PC-3 (cell line): ENCODE measurements at regions of chr14 and their contacts with region 1.

Region 1: GRCh38 chr14:90815822-90816700 is at the start of gene TTC7B:
- DNase-seq: peak; percentile 50
- ATAC-seq: peak; percentile 84
- H3K4me3 ChIP-seq: peak within 1 kb of the TSS; percentile 91
- H3K27ac ChIP-seq: no peak within 1 kb of the TSS
- H3K4me1 ChIP-seq: peaks cover 8% of the 10 kb centered on the region
- H3K27me3 ChIP-seq: no peaks in the 10 kb centered on the region
- CTCF ChIP-seq: no peak
- total RNA-seq, gene TTC7B: 43.2 and 45.6 TPM in 2 replicates

Region 2: GRCh38 chr14:90193925-90194324 is 622.1 kb before region 1 on chr14:
- CTCF ChIA-PET with region 1: no interaction called
- POLR2A ChIA-PET with region 1: no interaction called
- intact Hi-C with region 1: no loop called
- DNase-seq: no peak
- ATAC-seq: no peak
- H3K4me3 ChIP-seq: no peak overlapping the region
- H3K27ac ChIP-seq: no peak overlapping the region
- H3K4me1 ChIP-seq: no peaks in the 10 kb centered on the region
- H3K27me3 ChIP-seq: no peaks in the 10 kb centered on the region
- CTCF ChIP-seq: peak; percentile 48

Region 3: DNA sequence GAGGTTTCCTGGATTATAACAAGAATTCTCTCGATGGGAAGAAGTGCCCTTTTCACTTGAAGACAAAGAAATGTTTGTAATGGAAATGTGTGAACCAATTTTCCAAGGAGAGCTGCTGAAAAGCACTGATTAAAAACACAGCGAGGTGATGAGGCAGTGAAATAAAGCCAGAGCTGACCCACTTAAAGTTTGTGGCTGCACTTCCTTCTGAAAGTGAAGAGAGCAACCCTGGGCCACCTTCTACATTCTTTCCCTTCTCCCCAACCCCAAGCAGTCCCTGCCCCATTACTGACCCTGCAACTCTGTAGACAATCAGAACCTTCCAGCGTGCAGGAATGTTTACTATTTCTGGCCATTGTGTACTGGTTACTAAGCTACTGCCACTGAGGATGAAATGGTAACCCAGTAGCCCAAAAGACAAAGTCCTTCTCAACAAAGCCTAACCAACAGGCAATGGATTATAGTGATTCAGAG is 173.8 kb before region 1 on chr14:
- CTCF ChIA-PET with region 1: no interaction called
- POLR2A ChIA-PET with region 1: interaction called, 16 read pairs
- intact Hi-C with region 1: no loop called
- DNase-seq: no peak
- ATAC-seq: no peak
- H3K4me3 ChIP-seq: no peak overlapping the region
- H3K27ac ChIP-seq: no peak overlapping the region
- H3K4me1 ChIP-seq: peaks cover 12% of the 10 kb centered on the region
- H3K27me3 ChIP-seq: no peaks in the 10 kb centered on the region
- CTCF ChIP-seq: no peak

Region 4: GRCh38 chr14:90774316-90774715 is 41.7 kb before region 1 on chr14:
- CTCF ChIA-PET with region 1: no interaction called
- POLR2A ChIA-PET with region 1: no interaction called
- intact Hi-C with region 1: no loop called
- DNase-seq: no peak
- ATAC-seq: no peak
- H3K4me3 ChIP-seq: no peak overlapping the region
- H3K27ac ChIP-seq: no peak overlapping the region
- H3K4me1 ChIP-seq: no peaks in the 10 kb centered on the region
- H3K27me3 ChIP-seq: no peaks in the 10 kb centered on the region
- CTCF ChIP-seq: no peak

Region 5: GRCh38 chr14:90839024-90839888 is 23.2 kb after region 1 on chr14:
- CTCF ChIA-PET with region 1: no interaction called
- POLR2A ChIA-PET with region 1: interaction called, 14 read pairs
- intact Hi-C with region 1: no loop called
- DNase-seq: no peak
- ATAC-seq: peak; percentile 71
- H3K4me3 ChIP-seq: no peak overlapping the region
- H3K27ac ChIP-seq: no peak overlapping the region
- H3K4me1 ChIP-seq: 0 out of 2 replicates have a peak, but pooled peaks cover 5% of the 10 kb centered on the region
- H3K27me3 ChIP-seq: no peaks in the 10 kb centered on the region
- CTCF ChIP-seq: no peak

Region 6: DNA sequence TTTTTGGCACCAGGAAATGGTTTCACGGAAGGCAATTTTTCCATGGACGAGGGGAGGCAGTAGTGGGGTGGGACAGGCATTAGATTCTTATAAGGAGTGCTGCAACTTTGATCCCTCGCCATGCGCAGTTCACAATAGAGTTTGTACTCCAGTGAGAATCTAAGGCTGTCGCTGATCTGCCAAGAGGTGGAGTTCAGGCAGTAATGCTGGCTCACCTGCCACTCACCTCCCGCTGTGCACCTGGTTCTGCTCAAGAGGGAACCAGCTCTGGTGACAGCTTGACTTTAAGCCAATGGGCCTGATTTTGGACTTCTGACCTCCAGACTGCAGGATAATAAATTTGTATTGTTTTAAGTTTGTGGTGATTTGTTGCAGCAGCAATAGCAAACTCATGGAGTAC is 81.0 kb after region 1 on chr14:
- CTCF ChIA-PET with region 1: no interaction called
- POLR2A ChIA-PET with region 1: no interaction called
- intact Hi-C with region 1: no loop called
- DNase-seq: no peak
- ATAC-seq: no peak
- H3K4me3 ChIP-seq: no peak overlapping the region
- H3K27ac ChIP-seq: no peak overlapping the region
- H3K4me1 ChIP-seq: no peaks in the 10 kb centered on the region
- H3K27me3 ChIP-seq: no peaks in the 10 kb centered on the region
- CTCF ChIP-seq: no peak